ENCODE measurements at regions of chr6 and their contacts with region 1.

Region 1: GRCh38 chr6:30646458-30647241 is at the start of gene C6orf136:
- DNase-seq: peak; percentile 84 to 98 (median 92)
- ATAC-seq: peak; percentile 83
- H3K4me3 ChIP-seq: peak within 1 kb of the TSS; percentile 91 to 93
- H3K4me3 Mint-ChIP-seq: peak within 1 kb of the TSS; percentile 86
- H3K27ac ChIP-seq: peak within 1 kb of the TSS; percentile 80 to 92
- H3K27ac Mint-ChIP-seq: peak within 1 kb of the TSS; percentile 92
- H3K4me1 ChIP-seq: peaks cover 20% of the 10 kb centered on the region
- H3K4me1 Mint-ChIP-seq: peaks cover 30% of the 10 kb centered on the region
- H3K27me3 ChIP-seq: no peaks in the 10 kb centered on the region
- H3K27me3 Mint-ChIP-seq: no peaks in the 10 kb centered on the region
- CTCF ChIP-seq: no peak
- total RNA-seq, gene C6orf136: 31.4 to 36.0 TPM

Region 2: GRCh38 chr6:30571075-30571768 is 75.4 kb before region 1 on chr6 and contains the start of gene ABCF1:
- CTCF ChIA-PET with region 1: no interaction called
- POLR2A ChIA-PET with region 1: no interaction called
- intact Hi-C with region 1: loop called in 1 of 2 experiments (anchors 2 kb)
- DNase-seq: peak; percentile 99 to 100 (median 100)
- ATAC-seq: peak; percentile 96
- H3K4me3 ChIP-seq: peak within 1 kb of the TSS; percentile 64 to 86
- H3K4me3 Mint-ChIP-seq: peak within 1 kb of the TSS; percentile 98
- H3K27ac ChIP-seq: peak within 1 kb of the TSS; percentile 90 to 98
- H3K27ac Mint-ChIP-seq: peak within 1 kb of the TSS; percentile 99
- H3K4me1 ChIP-seq: peaks cover 54% of the 10 kb centered on the region
- H3K4me1 Mint-ChIP-seq: peaks cover 69% of the 10 kb centered on the region
- H3K27me3 ChIP-seq: no peaks in the 10 kb centered on the region
- H3K27me3 Mint-ChIP-seq: no peaks in the 10 kb centered on the region
- CTCF ChIP-seq: no peak
- total RNA-seq, gene ABCF1: 121 to 130 TPM

Region 3: GRCh38 chr6:30626484-30627366 is 19.9 kb before region 1 on chr6 and contains the start of gene ATAT1:
- CTCF ChIA-PET with region 1: interaction called, 6 read pairs
- POLR2A ChIA-PET with region 1: interaction called, 3 read pairs
- intact Hi-C with region 1: loop called (anchors 1 kb)
- DNase-seq: peak; percentile 78 to 95 (median 92)
- ATAC-seq: peak; percentile 99
- H3K4me3 ChIP-seq: peak within 1 kb of the TSS; percentile 68 to 78
- H3K4me3 Mint-ChIP-seq: peak within 1 kb of the TSS; percentile 89
- H3K27ac ChIP-seq: peak within 1 kb of the TSS; percentile 85 to 94
- H3K27ac Mint-ChIP-seq: peak within 1 kb of the TSS; percentile 97
- H3K4me1 ChIP-seq: peaks cover 16% of the 10 kb centered on the region
- H3K4me1 Mint-ChIP-seq: peaks cover 29% of the 10 kb centered on the region
- H3K27me3 ChIP-seq: no peaks in the 10 kb centered on the region
- H3K27me3 Mint-ChIP-seq: no peaks in the 10 kb centered on the region
- CTCF ChIP-seq: peak; percentile 61
- total RNA-seq, gene ATAT1: 4.2 to 6.8 TPM

Region 4: DNA sequence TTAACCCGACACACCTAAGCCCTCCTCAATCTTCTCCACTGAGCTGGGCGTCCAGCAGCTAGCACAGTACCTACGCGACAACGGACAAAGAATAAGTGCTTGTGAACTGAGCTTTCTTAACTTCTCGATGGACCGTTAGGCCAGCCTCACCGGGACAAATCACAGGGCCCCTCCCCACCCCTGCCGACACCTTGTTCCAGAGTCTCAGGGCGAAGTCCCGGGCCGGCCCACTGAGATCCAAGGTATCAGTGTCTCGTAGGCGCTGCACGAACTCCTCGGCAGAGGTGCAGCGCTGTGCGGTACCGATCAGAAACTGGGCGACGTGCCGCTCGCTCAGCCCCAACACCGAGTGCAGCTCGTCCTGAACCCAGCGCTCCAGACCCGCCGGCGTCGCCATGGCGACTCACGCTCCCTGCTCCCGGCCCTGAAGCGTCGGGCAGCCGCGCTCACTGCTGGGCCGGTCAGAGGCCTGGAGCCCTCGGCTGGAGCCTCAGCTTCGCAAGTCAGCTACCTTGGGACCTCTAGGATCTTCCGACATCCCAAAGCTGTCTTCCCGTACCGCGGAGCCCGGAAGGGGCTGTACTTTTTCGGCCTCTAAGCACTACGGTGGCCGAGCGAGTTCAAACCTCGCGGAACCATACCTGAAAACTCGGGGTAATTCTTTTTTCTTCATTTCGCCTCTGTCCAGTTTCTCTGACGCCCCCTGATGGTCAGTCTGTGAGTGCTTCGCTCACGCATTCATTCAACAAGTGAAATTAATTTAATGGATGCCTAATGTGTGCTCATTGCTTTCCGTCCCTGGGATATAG is 26.0 kb after region 1 on chr6 and contains the start of gene DHX16:
- CTCF ChIA-PET with region 1: interaction called, 6 read pairs
- POLR2A ChIA-PET with region 1: interaction called, 4 read pairs
- intact Hi-C with region 1: loop called (anchors 1 kb)
- DNase-seq: peak; percentile 77 to 96 (median 90)
- ATAC-seq: peak; percentile 79
- H3K4me3 ChIP-seq: peak within 1 kb of the TSS; percentile 69 to 81
- H3K4me3 Mint-ChIP-seq: peak within 1 kb of the TSS; percentile 90
- H3K27ac ChIP-seq: peak within 1 kb of the TSS; percentile 51 to 71
- H3K27ac Mint-ChIP-seq: peak within 1 kb of the TSS; percentile 82
- H3K4me1 ChIP-seq: peaks cover 15% of the 10 kb centered on the region
- H3K4me1 Mint-ChIP-seq: peaks cover 38% of the 10 kb centered on the region
- H3K27me3 ChIP-seq: no peaks in the 10 kb centered on the region
- H3K27me3 Mint-ChIP-seq: no peaks in the 10 kb centered on the region
- CTCF ChIP-seq: peak; percentile 38
- total RNA-seq, gene DHX16: 15.8 to 17.9 TPM